ENCODE measurements at regions of chr9 and their contacts with region 1.

Region 1: GRCh38 chr9:121498150-121498486 is 1.5 kb downstream of the GGTA1 start:
- DNase-seq: no peak
- ATAC-seq: peak; percentile 73

Region 2: GRCh38 chr9:121532871-121533270 is 34.8 kb after region 1 on chr9:
- intact Hi-C with region 1: loop called (anchors 5 kb)
- DNase-seq: no peak
- ATAC-seq: no peak

Measured in Right ventricle myocardium superior (tissue), 1 donor.